Common myeloid progenitor, CD34-positive (primary cell): ENCODE measurements at regions of chr11 and their contacts with region 1.

Region 1: DNA sequence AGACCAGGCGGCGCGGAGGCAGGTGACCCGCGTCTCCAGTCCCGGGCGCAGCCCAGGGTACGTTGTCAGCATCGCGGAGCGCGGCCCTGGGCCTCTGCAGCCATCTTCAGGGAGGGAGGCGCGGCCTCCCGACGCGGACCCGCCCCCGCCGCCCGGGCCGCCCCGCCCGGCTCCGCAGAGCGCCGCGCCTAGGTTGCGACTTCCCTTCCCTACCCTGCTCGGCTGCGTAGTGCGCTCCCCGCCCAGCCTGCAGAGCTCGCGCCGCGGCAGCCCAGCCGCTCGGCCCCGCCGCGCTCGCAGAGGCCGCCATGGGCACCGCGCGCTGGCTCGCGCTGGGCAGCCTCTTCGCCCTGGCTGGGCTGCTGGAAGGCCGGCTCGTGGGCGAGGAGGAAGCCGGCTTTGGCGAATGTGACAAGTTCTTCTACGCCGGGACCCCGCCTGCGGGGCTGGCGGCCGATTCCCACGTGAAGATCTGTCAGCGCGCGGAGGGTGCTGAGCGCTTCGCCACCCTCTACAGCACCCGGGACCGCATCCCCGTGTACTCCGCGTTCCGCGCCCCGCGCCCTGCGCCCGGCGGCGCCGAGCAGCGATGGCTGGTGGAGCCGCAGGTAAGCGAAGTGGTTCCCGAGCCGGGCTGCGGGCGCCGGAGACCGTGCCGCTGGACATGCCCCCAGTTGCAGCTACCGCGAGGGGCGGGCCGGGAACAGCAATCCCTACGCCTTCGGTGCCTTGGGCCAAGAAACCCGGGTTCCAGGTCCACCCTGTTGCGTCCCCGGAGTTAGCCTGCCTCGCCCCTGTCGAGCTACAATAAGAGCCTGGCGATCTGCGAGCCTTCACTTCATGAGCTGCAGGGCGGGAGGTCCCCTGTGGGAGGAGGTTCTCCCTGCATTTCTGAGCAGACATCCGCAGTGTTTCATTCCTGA is at the start of gene ENDOD1:
- DNase-seq: peak; percentile 83 to 93 (median 90)
- H3K4me3 ChIP-seq: peak within 1 kb of the TSS; percentile 56 to 89 (median 79)
- H3K27ac ChIP-seq: peak within 1 kb of the TSS; percentile 47 to 66
- H3K4me1 ChIP-seq: peaks cover 5 to 21% (median 16%) of the 10 kb centered on the region in 4 experiments
- H3K27me3 ChIP-seq: no peaks in the 10 kb centered on the region

Region 2: DNA sequence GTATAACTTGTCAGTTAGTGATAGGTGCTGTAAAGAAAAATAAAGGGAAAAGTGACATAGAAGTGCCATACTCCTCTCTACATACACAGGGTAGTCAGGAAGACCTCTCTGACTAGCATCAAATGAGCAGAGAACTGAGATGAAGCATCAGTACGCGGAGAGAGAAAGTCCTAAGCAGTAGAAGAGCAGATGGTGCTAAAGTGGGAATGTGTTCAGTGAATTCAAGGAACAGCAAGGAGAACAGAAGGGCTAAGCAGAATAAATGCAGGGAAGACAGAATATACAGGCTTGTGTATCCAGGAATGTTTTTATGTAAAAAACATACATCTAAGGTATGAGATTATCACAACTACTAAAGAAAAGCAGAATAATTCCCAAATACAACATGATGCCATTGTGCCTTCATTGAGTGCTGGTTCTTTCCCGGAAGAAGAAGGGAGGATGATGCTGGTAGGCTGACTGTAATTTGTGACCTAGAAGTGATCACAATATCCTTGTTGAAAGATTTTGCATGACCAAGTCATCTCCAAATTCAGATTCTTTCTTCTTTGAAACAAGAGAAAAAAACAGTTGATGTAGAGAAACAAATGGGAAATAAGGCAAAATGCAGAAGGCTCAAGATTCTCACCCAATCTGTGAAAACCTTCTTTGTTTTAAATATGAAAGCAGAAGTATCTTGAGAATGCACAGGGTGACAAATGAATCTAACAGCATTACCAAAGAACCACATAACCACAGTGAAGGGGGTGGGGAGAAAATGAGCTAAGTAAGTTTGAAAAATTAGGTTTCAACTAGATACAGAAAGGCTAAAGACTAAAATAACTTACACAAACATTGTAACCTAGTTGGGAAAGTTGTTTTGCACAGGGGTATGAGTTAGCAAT is 616.7 kb before region 1 on chr11:
- CTCF ChIA-PET with region 1: no interaction called
- POLR2A ChIA-PET with region 1: no interaction called
- DNase-seq: peak; percentile 76 to 96 (median 95)
- H3K4me3 ChIP-seq: peak overlapping the region in 4 of 7 experiments; percentile 17 to 54 (median 26)
- H3K27ac ChIP-seq: peak overlapping the region; percentile 3 to 47
- H3K4me1 ChIP-seq: peaks cover 14 to 29% (median 24%) of the 10 kb centered on the region in 4 experiments
- H3K27me3 ChIP-seq: no peaks in the 10 kb centered on the region

Region 3: DNA sequence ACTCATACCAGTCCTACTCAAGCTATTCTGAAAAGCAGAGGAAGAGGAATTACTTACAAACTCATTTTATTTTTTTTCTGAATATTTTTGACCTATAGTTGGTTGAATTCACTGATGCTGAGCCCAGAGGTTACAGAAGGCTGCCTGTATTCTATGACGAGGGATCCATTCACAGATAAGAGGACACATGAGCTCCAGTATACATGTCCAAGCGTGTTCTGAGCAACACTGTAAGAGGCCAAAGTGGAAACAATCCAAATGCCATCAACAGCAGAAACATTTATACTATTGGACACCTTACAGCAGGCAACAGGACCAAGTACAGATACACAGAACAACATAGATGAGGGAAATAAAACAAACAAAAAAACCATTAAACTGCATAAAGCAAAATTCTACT is 54.6 kb before region 1 on chr11:
- CTCF ChIA-PET with region 1: no interaction called
- POLR2A ChIA-PET with region 1: no interaction called
- DNase-seq: no peak
- H3K4me3 ChIP-seq: no peak overlapping the region
- H3K27ac ChIP-seq: no peak overlapping the region
- H3K4me1 ChIP-seq: no peaks in the 10 kb centered on the region
- H3K27me3 ChIP-seq: peaks cover 0 to 15% (median 2%) of the 10 kb centered on the region in 5 experiments

Region 4: GRCh38 chr11:95067039-95067840 is 22.6 kb before region 1 on chr11:
- CTCF ChIA-PET with region 1: interaction called, 123 read pairs
- POLR2A ChIA-PET with region 1: interaction called, 20 read pairs
- DNase-seq: peak; percentile 69 to 85 (median 77)
- H3K4me3 ChIP-seq: peak overlapping the region; percentile 80 to 97 (median 92)
- H3K27ac ChIP-seq: peak overlapping the region; percentile 77 to 93
- H3K4me1 ChIP-seq: peaks cover 4 to 25% (median 19%) of the 10 kb centered on the region in 4 experiments
- H3K27me3 ChIP-seq: no peaks in the 10 kb centered on the region

Region 5: DNA sequence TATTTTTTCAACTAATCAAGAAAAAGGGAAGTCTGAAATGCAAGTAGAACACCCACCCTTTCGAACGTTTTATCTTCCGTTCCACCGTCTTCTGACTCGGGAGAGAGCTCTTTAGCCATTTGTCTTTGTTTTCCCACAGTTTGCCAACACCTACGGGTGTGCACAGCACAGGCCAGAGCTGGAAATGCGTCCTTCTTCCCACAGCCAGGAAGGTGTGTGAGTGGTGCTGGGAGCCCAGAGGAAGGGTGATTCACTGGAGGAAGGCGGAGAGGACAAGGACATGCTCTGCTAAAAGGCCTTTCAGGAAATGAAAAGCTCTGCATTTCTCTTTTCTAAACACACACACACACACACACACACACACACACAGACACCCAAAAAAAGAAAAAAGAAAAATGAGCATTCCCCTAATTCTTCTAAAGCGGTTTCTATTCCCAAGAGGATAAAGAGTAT is 18.3 kb after region 1 on chr11:
- CTCF ChIA-PET with region 1: interaction called, 64 read pairs
- POLR2A ChIA-PET with region 1: no interaction called
- DNase-seq: peak in 2 of 3 donors; percentile 41 to 46
- H3K4me3 ChIP-seq: peak overlapping the region in 4 of 7 experiments; percentile 20 to 68 (median 40)
- H3K27ac ChIP-seq: peak overlapping the region in 1 of 2 experiments; percentile 67
- H3K4me1 ChIP-seq: peaks cover 6 to 21% (median 14%) of the 10 kb centered on the region in 4 experiments
- H3K27me3 ChIP-seq: no peaks in the 10 kb centered on the region

Region 6: GRCh38 chr11:95138448-95138847 is 48.6 kb after region 1 on chr11:
- CTCF ChIA-PET with region 1: interaction called, 13 read pairs
- POLR2A ChIA-PET with region 1: no interaction called
- DNase-seq: peak in 2 of 3 donors; percentile 36 to 46
- H3K4me3 ChIP-seq: no peak overlapping the region
- H3K27ac ChIP-seq: no peak overlapping the region
- H3K4me1 ChIP-seq: no peaks in the 10 kb centered on the region
- H3K27me3 ChIP-seq: no peaks in the 10 kb centered on the region